Activated CD4-positive, alpha-beta memory T cell treated with anti-CD3 and anti-CD28 coated beads for 36 hours (primary cell): ENCODE measurements at regions of chr10 and their contacts with region 1.

Region 1: GRCh38 chr10:100009793-100010676 is at the start of gene DNMBP:
- DNase-seq: peak; percentile 86
- H3K4me3 Mint-ChIP-seq: peak within 1 kb of the TSS; percentile 86
- H3K27ac Mint-ChIP-seq: no peak within 1 kb of the TSS
- H3K4me1 Mint-ChIP-seq: peaks cover 46% of the 10 kb centered on the region
- H3K27me3 Mint-ChIP-seq: peaks cover 10% of the 10 kb centered on the region
- total RNA-seq, gene DNMBP: 2.1 to 2.2 TPM

Region 2: GRCh38 chr10:99732033-99732912 is 277.8 kb before region 1 on chr10 and contains the starts of genes COX15 and CUTC:
- CTCF ChIA-PET with region 1: interaction called, 10 read pairs
- POLR2A ChIA-PET with region 1: no interaction called
- intact Hi-C with region 1: no loop called
- DNase-seq: peak; percentile 97
- H3K4me3 Mint-ChIP-seq: peak within 1 kb of the TSS; percentile 100
- H3K27ac Mint-ChIP-seq: peak within 1 kb of the TSS; percentile 100
- H3K4me1 Mint-ChIP-seq: peaks cover 29% of the 10 kb centered on the region
- H3K27me3 Mint-ChIP-seq: no peaks in the 10 kb centered on the region
- total RNA-seq, gene COX15: 31.3 to 31.5 TPM
- total RNA-seq, gene CUTC: 26.0 to 26.6 TPM

Region 3: DNA sequence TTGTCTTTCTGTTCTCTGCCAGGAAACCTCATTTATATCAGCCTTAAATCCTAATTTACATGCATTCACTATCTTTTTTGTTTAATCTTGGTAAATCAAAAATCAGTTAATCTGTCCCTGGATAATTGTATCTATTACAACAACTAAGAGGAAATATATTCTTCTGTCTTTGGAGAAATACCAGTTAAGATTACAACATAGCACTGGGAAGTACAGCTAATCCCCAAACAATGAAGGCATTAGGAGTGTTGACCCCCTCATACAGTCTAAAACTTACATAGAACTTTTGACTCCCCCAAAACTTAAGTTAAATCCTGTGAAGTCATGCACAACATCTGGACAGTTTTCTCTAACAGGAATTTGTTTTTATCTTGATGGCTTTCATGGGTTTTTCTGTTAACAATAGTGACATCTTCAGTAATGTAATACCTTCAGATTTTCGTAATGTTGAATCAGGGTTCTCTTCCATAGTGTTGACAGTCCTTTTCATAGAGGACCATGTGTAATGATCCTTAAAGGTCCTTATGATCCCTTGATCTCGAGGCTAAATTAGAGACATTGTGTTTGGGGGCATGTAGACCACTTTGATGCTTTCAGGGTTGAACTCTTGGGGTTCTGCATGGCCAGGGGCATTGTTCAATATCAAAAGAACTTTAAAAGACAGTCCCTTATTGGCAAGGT is 251.7 kb before region 1 on chr10:
- CTCF ChIA-PET with region 1: no interaction called
- POLR2A ChIA-PET with region 1: no interaction called
- intact Hi-C with region 1: no loop called
- DNase-seq: no peak
- H3K4me3 Mint-ChIP-seq: no peak overlapping the region
- H3K27ac Mint-ChIP-seq: no peak overlapping the region
- H3K4me1 Mint-ChIP-seq: no peaks in the 10 kb centered on the region
- H3K27me3 Mint-ChIP-seq: no peaks in the 10 kb centered on the region

Region 4: DNA sequence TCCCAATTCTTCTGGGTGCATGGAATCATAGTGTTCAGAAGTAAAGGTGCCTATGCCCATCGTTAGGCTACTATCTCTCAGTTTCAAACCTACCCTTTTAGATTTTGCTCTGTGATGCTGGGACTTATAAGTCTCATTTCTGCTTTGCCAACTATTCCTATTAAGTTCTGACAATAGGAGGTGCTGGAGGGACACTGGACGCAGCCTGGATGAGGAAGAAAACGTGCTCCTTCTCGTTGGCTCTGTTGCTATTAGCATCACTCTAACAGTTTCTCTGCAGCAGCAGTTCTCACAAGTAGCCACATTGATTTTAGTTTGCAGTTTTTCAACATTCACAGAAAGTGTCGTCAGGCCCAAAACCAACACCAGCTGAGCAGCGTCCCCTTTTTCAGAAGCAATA is 155.2 kb before region 1 on chr10:
- CTCF ChIA-PET with region 1: interaction called, 15 read pairs
- POLR2A ChIA-PET with region 1: no interaction called
- intact Hi-C with region 1: no loop called
- DNase-seq: no peak
- H3K4me3 Mint-ChIP-seq: no peak overlapping the region
- H3K27ac Mint-ChIP-seq: no peak overlapping the region
- H3K4me1 Mint-ChIP-seq: no peaks in the 10 kb centered on the region
- H3K27me3 Mint-ChIP-seq: peaks cover 5% of the 10 kb centered on the region

Region 5: GRCh38 chr10:99870123-99870730 is 139.8 kb before region 1 on chr10:
- CTCF ChIA-PET with region 1: interaction called, 16 read pairs
- POLR2A ChIA-PET with region 1: interaction called, 6 read pairs
- intact Hi-C with region 1: loop called (anchors 1 kb)
- DNase-seq: peak; percentile 74
- H3K4me3 Mint-ChIP-seq: peak overlapping the region; percentile 42
- H3K27ac Mint-ChIP-seq: no peak overlapping the region
- H3K4me1 Mint-ChIP-seq: peaks cover 26% of the 10 kb centered on the region
- H3K27me3 Mint-ChIP-seq: peaks cover 87% of the 10 kb centered on the region

Region 6: DNA sequence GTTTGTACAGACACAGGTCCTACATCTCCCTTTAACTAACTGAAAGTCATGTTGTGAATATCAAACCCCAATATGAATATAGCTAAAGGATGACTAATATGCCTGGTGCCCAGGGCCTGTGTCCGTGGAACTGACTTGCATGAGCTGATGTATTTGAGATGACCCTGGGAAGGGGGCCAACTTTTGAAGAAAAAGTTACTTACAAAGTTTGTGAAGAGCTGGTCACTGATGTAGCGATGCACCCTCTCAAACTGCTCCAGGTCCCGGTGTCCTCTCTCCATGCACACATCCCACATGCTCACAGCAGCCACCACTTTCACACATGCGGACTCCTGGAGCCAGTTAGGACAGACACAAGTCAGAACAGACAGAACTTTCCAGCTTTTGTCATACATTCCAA is 121.4 kb before region 1 on chr10:
- CTCF ChIA-PET with region 1: no interaction called
- POLR2A ChIA-PET with region 1: no interaction called
- intact Hi-C with region 1: no loop called
- DNase-seq: no peak
- H3K4me3 Mint-ChIP-seq: no peak overlapping the region
- H3K27ac Mint-ChIP-seq: no peak overlapping the region
- H3K4me1 Mint-ChIP-seq: no peaks in the 10 kb centered on the region
- H3K27me3 Mint-ChIP-seq: no peaks in the 10 kb centered on the region

Region 7: GRCh38 chr10:99993701-99994689 is 16.0 kb before region 1 on chr10:
- CTCF ChIA-PET with region 1: interaction called, 17 read pairs
- POLR2A ChIA-PET with region 1: interaction called, 5 read pairs
- intact Hi-C with region 1: loop called (anchors 1 kb)
- DNase-seq: peak; percentile 69
- H3K4me3 Mint-ChIP-seq: no peak overlapping the region
- H3K27ac Mint-ChIP-seq: no peak overlapping the region
- H3K4me1 Mint-ChIP-seq: peaks cover 11% of the 10 kb centered on the region
- H3K27me3 Mint-ChIP-seq: peaks cover 2% of the 10 kb centered on the region

Region 8: DNA sequence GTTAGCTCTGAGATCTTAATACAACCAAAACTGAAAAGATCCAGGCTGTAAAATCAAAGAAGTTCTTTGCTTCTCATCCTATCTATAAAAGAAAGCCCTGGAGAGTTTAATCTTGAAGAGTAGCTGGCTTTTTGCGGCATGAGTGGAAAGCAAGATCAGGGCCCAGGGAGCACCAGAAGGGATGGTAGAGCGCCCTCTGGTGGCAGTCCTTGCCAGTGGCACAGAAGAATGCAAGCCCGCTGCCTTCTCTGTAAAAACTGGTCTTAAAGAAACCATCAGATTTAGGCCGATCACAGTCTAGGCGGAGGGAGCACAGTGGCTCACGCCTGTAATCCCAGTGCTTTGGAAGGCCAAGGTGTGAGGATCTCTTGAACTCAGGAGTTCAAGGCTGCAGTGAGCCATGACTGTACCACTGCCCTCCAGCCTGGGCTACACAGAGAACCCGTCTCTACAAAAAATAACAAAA is 36.0 kb after region 1 on chr10:
- CTCF ChIA-PET with region 1: interaction called, 13 read pairs
- POLR2A ChIA-PET with region 1: interaction called, 3 read pairs
- intact Hi-C with region 1: no loop called
- DNase-seq: peak; percentile 87
- H3K4me3 Mint-ChIP-seq: no peak overlapping the region
- H3K27ac Mint-ChIP-seq: no peak overlapping the region
- H3K4me1 Mint-ChIP-seq: peaks cover 3% of the 10 kb centered on the region
- H3K27me3 Mint-ChIP-seq: no peaks in the 10 kb centered on the region

Region 9: GRCh38 chr10:100185364-100186252 is 175.6 kb after region 1 on chr10 and contains the start of gene ERLIN1:
- CTCF ChIA-PET with region 1: interaction called, 3 read pairs
- POLR2A ChIA-PET with region 1: no interaction called
- intact Hi-C with region 1: loop called (anchors 10 kb)
- DNase-seq: peak; percentile 96
- H3K4me3 Mint-ChIP-seq: peak within 1 kb of the TSS; percentile 90
- H3K27ac Mint-ChIP-seq: peak within 1 kb of the TSS; percentile 92
- H3K4me1 Mint-ChIP-seq: peaks cover 55% of the 10 kb centered on the region
- H3K27me3 Mint-ChIP-seq: no peaks in the 10 kb centered on the region
- total RNA-seq, gene ERLIN1: 15.4 to 16.8 TPM